Psoas muscle (tissue), 8 donors: ENCODE measurements at regions of chr15 and their contacts with region 1.

Region 1: GRCh38 chr15:73704869-73705645 is 20.9 kb downstream of the CD276 start:
- DNase-seq: peak; percentile 62 to 73
- ATAC-seq: peak; percentile 67 to 82 (median 75)
- H3K4me3 ChIP-seq: no peak overlapping the region
- H3K27ac ChIP-seq: no peak overlapping the region
- H3K4me1 ChIP-seq: no peaks in the 10 kb centered on the region
- H3K27me3 ChIP-seq: no peaks in the 10 kb centered on the region
- CTCF ChIP-seq: peak; percentile 74

Region 2: GRCh38 chr15:73660455-73660854 is 44.6 kb before region 1 on chr15:
- intact Hi-C with region 1: loop called (anchors 5 kb)
- DNase-seq: no peak
- ATAC-seq: no peak
- H3K4me3 ChIP-seq: no peak overlapping the region
- H3K27ac ChIP-seq: no peak overlapping the region
- H3K4me1 ChIP-seq: no peaks in the 10 kb centered on the region
- H3K27me3 ChIP-seq: peaks cover 0 to 6% (median 0%) of the 10 kb centered on the region in 3 donors
- CTCF ChIP-seq: no peak